HCT116 (cell line): ENCODE measurements at regions of chr12 and their contacts with region 1.

Region 1: DNA sequence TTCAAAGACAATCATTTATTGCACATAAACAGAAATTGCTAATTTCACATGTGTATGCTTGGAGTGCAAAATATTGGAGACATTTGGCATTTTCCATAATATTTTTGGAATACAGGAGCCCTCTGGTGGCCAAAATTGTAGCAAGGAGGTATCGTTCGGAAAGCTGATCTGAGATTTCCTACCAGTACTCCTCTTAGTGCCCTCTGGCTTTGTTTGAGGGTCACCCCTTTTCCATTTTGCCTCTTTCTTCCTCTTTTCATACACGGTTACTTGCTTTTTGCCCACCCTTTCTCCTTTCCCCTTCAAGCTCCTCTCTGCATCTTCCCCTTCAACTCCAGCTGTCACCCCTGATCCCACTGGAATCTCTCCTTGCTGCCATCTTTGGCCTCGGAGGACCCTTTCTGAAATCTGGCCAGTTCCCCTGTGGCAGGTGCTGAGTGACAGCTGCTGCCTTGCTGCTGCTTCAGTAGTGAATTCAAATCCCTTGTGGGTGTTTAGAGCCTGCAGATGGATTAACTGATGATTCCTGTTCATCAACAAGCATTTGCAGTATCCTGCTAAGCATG is 164.6 kb upstream of the PARP11 start:
- DNase-seq: no peak
- ATAC-seq: peak; percentile 54; the same call in 1 of the 2 replicates
- H3K4me3 ChIP-seq: no peak overlapping the region
- H3K27ac ChIP-seq: no peak overlapping the region
- H3K4me1 ChIP-seq: no peaks in the 10 kb centered on the region
- H3K27me3 ChIP-seq: peaks cover 60% of the 10 kb centered on the region
- CTCF ChIP-seq: peak; percentile 67 to 76 (median 73)
- POLR2A ChIP-seq: no peak
- RAD21 ChIP-seq: peak; percentile 71

Region 2: GRCh38 chr12:3885277-3886094 is 152.3 kb before region 1 on chr12:
- CTCF ChIA-PET with region 1: interaction called, 36 read pairs
- POLR2A ChIA-PET with region 1: no interaction called
- RAD21 ChIA-PET with region 1: interaction called in 1 of 2 experiments, 5 read pairs
- intact Hi-C with region 1: loop called (anchors 1 kb)
- DNase-seq: peak; percentile 8
- ATAC-seq: no peak
- H3K4me3 ChIP-seq: no peak overlapping the region
- H3K27ac ChIP-seq: no peak overlapping the region
- H3K4me1 ChIP-seq: no peaks in the 10 kb centered on the region
- H3K27me3 ChIP-seq: peaks cover 33% of the 10 kb centered on the region
- CTCF ChIP-seq: peak; percentile 40 to 84 (median 71); a peak in 5 of 6 replicates
- POLR2A ChIP-seq: no peak
- RAD21 ChIP-seq: peak; percentile 74

Region 3: DNA sequence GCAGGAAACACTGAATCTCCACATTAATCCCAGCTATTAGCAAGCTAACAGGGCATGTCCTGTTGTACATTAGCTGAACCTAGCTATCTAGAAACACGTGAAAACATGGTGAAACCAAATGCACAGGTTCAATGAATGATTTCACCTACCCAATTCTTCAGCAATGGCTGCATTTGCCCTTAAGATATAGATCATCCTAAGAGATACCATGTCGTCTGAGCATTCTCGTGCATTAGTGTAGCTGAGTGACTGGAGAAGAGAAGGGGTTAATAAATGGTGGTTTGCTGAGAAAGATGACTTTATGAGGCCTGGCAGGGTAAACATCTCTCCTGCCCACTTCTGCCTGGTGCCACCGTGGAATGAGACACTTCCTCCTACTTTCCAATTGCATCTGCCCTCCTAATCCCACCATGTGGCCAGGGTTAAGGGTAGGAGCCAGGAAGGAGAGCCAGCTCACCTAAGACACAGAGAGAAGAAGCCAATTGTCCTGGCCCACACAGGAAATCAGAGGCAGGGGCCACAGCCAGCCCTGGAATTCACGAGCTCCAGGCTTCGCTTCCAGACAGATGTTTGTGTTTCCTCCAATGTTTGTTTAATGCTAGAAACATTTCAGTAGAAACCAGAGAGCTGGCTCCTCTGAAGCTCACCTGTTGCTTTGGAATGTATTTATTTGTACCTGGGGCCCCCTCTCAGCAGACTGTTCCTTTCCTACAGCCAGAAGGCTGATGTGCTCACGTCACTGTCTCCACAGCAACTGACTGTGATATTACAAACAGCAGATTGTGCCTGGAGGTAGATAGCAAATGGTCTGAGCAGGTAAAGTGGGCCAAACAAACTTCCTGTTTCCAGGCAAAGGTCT is 38.6 kb before region 1 on chr12:
- CTCF ChIA-PET with region 1: interaction called, 9 read pairs
- POLR2A ChIA-PET with region 1: no interaction called
- RAD21 ChIA-PET with region 1: no interaction called
- intact Hi-C with region 1: loop called (anchors 1 kb)
- DNase-seq: no peak
- ATAC-seq: no peak
- H3K4me3 ChIP-seq: no peak overlapping the region
- H3K27ac ChIP-seq: no peak overlapping the region
- H3K4me1 ChIP-seq: no peaks in the 10 kb centered on the region
- H3K27me3 ChIP-seq: peaks cover 13% of the 10 kb centered on the region; the same call in 1 of the 2 replicates
- CTCF ChIP-seq: no peak
- POLR2A ChIP-seq: no peak
- RAD21 ChIP-seq: no peak

Region 4: DNA sequence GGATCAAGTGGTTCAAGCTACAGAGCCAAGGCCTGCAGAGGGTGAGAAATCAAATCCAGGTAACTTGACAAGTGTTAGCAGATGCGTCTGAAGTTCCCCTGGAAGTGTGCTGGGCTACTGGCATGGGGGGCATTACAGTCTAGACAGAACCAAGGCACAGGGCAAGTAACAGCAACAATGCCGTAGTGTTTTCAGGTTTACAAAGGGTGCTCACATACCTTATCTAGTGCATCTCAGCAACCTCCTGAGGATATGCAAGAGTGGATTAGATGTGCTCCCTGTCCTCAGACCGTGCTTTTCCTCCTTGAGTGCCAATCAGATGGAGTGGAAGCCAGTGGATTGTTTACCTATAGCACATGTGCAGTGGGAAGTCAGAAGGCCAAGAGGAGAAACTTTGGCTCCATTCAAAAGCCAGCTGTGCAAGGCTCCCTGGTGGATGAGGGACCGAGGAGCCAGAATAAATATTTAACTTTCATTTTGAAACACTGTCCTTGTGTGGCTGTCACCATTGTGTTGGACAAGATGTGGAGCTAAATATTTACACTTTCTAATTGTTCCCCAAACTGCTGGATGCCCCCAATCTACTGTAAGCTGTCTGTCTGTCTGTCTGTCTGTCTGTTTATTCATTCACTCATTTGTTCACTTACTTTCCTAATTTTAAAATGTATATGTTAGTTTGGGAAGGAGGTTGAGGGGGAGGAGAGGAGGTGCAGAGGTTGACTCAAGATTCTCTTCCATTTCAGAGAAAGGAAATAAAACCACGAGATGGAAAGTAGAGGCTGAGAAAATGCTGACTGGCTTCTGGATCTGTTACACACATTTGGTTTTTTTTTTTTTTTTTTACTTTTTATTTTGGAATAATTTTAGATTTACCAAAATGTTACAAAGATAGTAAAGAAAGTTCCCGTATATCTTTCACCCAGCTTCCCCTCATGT is 19.3 kb after region 1 on chr12:
- CTCF ChIA-PET with region 1: no interaction called
- POLR2A ChIA-PET with region 1: no interaction called
- RAD21 ChIA-PET with region 1: no interaction called
- intact Hi-C with region 1: no loop called
- DNase-seq: no peak
- ATAC-seq: no peak
- H3K4me3 ChIP-seq: no peak overlapping the region
- H3K27ac ChIP-seq: no peak overlapping the region
- H3K4me1 ChIP-seq: no peaks in the 10 kb centered on the region
- H3K27me3 ChIP-seq: peaks cover 80% of the 10 kb centered on the region
- CTCF ChIP-seq: no peak
- POLR2A ChIP-seq: no peak
- RAD21 ChIP-seq: no peak